ENCODE measurements at regions of chr7 and their contacts with region 1.

Region 1: GRCh38 chr7:141348728-141349127 is 202.5 kb upstream of the AGK start:
- DNase-seq: no peak
- CTCF ChIP-seq: no peak

Region 2: GRCh38 chr7:141333459-141333858 is 15.3 kb before region 1 on chr7:
- CTCF ChIA-PET with region 1: interaction called, 10 read pairs
- POLR2A ChIA-PET with region 1: no interaction called
- DNase-seq: no peak
- CTCF ChIP-seq: no peak

Region 3: DNA sequence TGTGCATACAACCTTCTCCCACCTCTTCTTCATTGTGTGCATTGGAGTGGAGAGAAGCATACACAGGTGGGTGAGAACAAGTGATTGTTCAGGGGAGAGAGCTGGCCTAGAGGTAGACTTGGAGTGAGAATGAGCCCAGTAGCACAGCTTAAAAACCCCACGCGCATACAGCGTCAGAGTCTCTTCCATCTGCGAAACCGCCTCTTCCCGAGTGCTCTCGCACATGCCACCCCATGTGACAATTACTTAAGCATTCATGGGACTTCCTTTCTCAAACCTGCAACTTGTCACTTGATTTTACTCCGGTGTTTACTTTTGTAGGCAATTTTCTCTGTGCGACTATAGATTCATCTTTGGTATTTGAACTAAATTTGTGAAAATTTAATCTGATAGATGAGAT is 25.7 kb after region 1 on chr7:
- CTCF ChIA-PET with region 1: no interaction called
- POLR2A ChIA-PET with region 1: no interaction called
- DNase-seq: no peak
- CTCF ChIP-seq: no peak

Region 4: DNA sequence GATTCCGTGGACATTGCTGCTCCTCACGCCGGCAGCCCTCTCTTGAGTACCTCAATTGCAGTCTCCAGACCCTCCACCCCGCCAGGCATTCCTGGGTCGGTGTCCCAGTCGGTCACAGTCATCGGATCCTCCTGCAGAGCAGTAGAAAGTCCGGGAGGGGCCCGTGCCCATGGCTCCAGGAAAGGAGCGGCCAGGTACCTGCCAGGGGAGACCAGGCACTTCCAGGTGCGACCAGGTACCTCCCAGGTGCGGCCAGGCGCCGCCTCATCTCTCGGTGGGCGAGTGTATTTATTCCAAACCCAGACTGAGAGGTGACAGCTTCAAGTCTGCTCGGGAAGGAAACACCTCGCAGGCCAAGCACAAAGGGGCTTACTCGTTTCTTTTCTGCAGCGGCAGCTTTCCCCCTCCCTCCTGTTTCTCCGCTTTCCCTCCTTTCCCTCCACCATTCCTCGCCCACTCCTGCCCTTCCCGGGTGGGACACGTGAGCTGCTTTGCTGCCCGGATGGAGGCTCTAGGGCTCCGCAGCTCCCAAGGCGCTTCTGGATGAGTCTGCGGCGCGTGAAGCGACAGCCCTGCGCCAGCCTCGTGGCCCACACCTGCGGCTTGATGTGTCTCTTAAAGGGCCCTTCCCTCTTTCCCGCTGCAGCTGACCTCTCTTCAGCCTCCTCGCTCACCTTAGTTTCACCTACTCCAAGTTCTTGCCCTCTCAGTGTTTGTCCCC is 163.1 kb after region 1 on chr7:
- CTCF ChIA-PET with region 1: no interaction called
- POLR2A ChIA-PET with region 1: no interaction called
- DNase-seq: no peak
- CTCF ChIP-seq: no peak

Measured in GM10248 (cell line).